ENCODE measurements at regions of chr1 and their contacts with region 1.

Region 1: DNA sequence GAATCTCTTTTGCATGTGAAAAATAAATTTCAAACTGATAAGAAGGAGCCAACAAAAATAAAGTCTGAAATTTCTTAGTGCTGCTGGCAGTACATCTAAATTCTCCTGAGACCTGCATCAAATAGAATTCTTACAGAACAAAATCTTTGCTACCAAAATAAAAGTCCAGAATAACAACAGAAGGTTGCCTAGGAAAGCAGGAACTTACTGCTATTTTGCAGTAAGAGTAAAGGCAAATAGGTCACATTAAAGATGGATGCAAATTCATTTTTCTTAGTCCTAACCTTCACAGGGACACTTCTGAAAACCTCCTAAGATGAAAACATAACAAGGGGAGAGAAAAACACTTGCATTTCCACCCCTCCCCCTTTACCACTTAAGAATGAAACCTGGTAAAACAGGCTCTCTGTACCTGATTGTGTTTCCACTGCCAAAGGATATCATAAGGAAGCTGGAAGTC is 59.0 kb downstream of the RUSC1 start:
- DNase-seq: peak in 1 of 2 donors; percentile 9
- ATAC-seq: peak; percentile 64 to 87 (median 85)
- H3K4me3 ChIP-seq: peak overlapping the region in 4 of 10 donors; percentile 16 to 36 (median 22)
- H3K27ac ChIP-seq: peak overlapping the region in 8 of 10 donors; percentile 16 to 74 (median 58)
- H3K4me1 ChIP-seq: peaks cover 0 to 28% (median 23%) of the 10 kb centered on the region in 9 donors
- H3K27me3 ChIP-seq: no peaks in the 10 kb centered on the region
- CTCF ChIP-seq: no peak

Region 2: DNA sequence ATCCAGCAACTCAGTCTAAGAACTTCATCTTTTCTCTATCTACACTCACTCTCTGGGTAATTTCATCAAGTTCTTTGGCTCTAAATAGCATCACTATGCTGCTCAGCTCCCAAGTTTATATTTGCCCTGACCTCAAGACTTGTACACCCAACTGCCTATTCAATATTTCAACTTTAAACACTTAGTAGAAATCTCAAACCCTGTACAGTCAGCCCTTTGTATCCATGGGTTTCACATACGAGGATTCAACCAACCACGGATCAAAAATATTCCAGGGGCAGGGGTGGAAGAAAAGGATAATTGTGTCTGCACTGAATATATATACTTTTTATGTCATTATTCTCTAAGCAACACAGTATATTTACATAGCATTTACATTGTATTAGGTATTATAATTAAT is 169.0 kb after region 1 on chr1:
- intact Hi-C with region 1: no loop called
- DNase-seq: no peak
- ATAC-seq: no peak
- H3K4me3 ChIP-seq: no peak overlapping the region
- H3K27ac ChIP-seq: peak overlapping the region in 1 of 10 donors; percentile 13
- H3K4me1 ChIP-seq: peaks cover 0 to 35% (median 13%) of the 10 kb centered on the region in 9 donors
- H3K27me3 ChIP-seq: no peaks in the 10 kb centered on the region
- CTCF ChIP-seq: no peak

Region 3: DNA sequence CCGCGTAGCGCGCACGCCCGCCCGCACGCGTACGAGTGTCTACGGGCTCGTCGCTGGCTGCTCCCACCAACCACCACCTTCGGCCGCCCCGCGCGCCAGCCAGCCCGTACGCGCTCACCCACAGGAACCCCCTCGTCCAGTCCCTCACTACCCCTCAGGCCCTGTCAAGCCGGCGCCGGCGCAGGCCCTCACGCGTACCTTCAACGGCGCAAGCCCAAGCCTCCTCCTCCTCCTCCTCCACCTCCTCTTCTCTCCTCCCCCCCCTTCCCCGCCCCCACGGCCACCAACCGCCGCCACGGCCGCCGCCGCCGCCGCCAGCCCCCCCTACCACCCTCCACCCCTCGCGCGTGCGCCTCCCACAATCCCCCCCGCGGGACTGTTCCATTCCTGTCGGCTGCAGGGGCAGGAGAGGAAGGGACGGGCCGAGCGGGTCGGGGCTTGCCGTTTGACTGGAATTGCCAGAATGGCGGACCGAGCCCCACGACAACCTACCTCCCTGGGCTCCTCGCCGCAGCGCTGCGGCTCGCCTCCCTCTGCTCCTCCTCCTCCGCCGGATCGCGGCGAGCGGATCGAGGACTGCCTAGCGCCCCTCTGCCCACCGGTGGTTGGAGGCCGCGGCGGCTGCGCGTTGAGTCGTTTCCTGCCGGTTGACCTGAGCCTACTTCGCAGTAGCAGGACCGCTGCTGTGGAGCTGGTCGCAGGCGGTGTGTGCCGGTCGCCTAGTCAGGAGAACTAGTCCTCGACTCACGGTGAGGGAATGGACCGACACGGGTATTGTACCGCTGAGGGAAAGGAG is 183.1 kb after region 1 on chr1 and contains the start of gene ASH1L:
- intact Hi-C with region 1: loop called in 1 of 10 experiments (anchors 2 kb)
- DNase-seq: peak; percentile 94 to 97
- ATAC-seq: peak; percentile 94 to 97 (median 96)
- H3K4me3 ChIP-seq: peak within 1 kb of the TSS; percentile 91 to 98 (median 96)
- H3K27ac ChIP-seq: peak within 1 kb of the TSS; percentile 92 to 100 (median 98)
- H3K4me1 ChIP-seq: peaks cover 8 to 47% (median 39%) of the 10 kb centered on the region in 9 donors
- H3K27me3 ChIP-seq: no peaks in the 10 kb centered on the region
- CTCF ChIP-seq: no peak
- total RNA-seq, gene ASH1L: 42.0 to 56.8 (median 48.2) TPM